Aorta (tissue), 5 donors: ENCODE measurements at regions of chr5 and their contacts with region 1.

Region 1: GRCh38 chr5:176537608-176538504 is 654 bp upstream of the RNF44 start:
- DNase-seq: peak; percentile 99
- ATAC-seq: peak; percentile 95
- H3K4me3 ChIP-seq: peak overlapping the region; percentile 68 to 77
- H3K27ac ChIP-seq: peak overlapping the region in 1 of 2 donors; percentile 93
- H3K4me1 ChIP-seq: no peaks in the 10 kb centered on the region
- H3K27me3 ChIP-seq: no peaks in the 10 kb centered on the region

Region 2: DNA sequence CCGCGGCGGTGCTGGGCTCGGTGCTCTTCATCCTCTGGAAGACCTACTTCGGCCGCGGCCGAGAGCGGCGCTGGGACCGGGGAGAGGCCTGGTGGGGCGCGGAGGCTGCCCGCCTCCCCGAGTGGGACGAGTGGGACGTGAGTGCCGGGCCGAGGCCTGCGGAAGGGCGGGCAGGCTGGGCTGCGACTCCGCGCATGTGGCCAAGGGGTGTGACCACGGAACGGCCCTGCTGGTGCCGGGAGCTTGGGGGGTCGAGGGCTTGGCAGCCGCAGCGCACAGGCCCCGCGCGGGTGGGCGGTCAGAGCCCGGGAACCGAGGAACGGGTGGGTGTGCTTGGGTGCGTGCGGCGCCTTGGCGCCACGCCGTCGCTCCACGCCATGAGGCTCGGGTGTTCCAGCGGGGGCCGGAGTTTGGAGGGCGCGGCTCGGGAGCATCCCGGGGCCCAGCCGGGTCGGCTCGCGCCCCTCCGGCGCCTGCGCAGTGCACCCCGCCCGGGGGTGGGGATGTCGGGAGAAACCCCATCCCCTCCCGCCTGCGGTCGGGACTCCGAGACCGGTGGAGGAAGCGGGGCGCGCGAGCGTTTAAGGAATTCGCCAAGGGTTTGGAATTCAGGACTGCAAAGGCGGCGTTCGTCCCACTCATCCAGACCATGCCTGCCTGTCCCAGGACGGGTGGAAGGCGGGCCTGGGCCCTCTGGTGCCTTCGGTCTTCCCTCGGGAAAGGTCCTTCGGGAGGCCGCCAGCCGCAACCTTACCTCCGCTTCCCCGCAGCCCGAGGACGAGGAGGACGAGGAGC is 172.0 kb before region 1 on chr5:
- intact Hi-C with region 1: loop called in 1 of 2 experiments (anchors 5 kb)
- DNase-seq: peak; percentile 75 to 86
- ATAC-seq: peak; percentile 49
- H3K4me3 ChIP-seq: peak overlapping the region; percentile 46 to 65
- H3K27ac ChIP-seq: peak overlapping the region in 1 of 2 donors; percentile 0
- H3K4me1 ChIP-seq: no peaks in the 10 kb centered on the region
- H3K27me3 ChIP-seq: no peaks in the 10 kb centered on the region

Region 3: GRCh38 chr5:176388444-176389134 is 149.3 kb before region 1 on chr5 and contains the starts of genes HIGD2A and NOP16:
- intact Hi-C with region 1: loop called (anchors 5 to 10 kb)
- DNase-seq: peak; percentile 100
- ATAC-seq: peak; percentile 98
- H3K4me3 ChIP-seq: peak within 1 kb of the TSS; percentile 35 to 39
- H3K27ac ChIP-seq: peak within 1 kb of the TSS; percentile 31 to 56
- H3K4me1 ChIP-seq: peaks cover 0 to 3% of the 10 kb centered on the region in 2 donors
- H3K27me3 ChIP-seq: no peaks in the 10 kb centered on the region
- total RNA-seq, gene HIGD2A: 46.8 to 60.9 TPM
- total RNA-seq, gene NOP16: 9.7 to 19.2 TPM

Region 4: GRCh38 chr5:176415952-176416924 is 121.6 kb before region 1 on chr5 and contains the start of gene CLTB:
- intact Hi-C with region 1: loop called (anchors 10 kb)
- DNase-seq: peak; percentile 93 to 98
- ATAC-seq: peak; percentile 98
- H3K4me3 ChIP-seq: peak within 1 kb of the TSS; percentile 91 to 98
- H3K27ac ChIP-seq: peak within 1 kb of the TSS; percentile 89 to 90
- H3K4me1 ChIP-seq: no peaks in the 10 kb centered on the region
- H3K27me3 ChIP-seq: no peaks in the 10 kb centered on the region
- total RNA-seq, gene CLTB: 86.7 to 124 TPM

Region 5: DNA sequence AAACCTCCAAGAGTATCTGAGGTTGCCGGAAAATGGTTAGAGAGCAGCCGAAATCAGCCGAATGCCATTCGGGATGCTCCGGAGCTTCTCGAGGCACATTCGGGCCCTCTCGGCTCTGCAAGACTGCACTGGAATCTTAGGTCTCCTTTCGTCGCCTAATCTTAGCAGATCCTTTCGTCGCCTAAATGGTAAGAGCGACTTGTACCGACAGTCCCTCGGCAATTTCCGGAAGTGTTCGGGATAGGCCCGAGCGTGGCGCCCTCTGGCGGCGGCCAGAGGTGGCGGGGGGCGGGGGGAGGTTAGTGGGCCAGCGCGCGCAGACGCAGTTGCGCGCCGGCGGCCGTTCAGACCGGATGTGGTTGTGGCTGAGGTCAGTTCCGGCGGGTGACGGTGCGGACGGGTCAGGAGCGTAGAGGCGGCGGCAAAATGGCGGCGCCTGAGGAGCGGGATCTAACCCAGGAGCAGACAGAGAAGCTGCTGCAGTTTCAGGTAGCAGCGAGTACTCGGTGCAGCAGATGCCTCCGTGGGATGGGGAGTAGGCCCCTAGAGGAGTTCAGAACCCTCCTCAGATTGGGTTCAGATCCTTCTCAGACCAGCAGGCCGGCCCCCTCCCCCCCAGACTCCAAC is 89.8 kb before region 1 on chr5 and contains the start of gene FAF2:
- intact Hi-C with region 1: loop called in 1 of 2 experiments (anchors 5 kb)
- DNase-seq: peak; percentile 98 to 99
- ATAC-seq: peak; percentile 99
- H3K4me3 ChIP-seq: peak within 1 kb of the TSS; percentile 68 to 95
- H3K27ac ChIP-seq: peak within 1 kb of the TSS; percentile 77 to 93
- H3K4me1 ChIP-seq: peaks cover 0 to 1% of the 10 kb centered on the region in 2 donors
- H3K27me3 ChIP-seq: no peaks in the 10 kb centered on the region
- total RNA-seq, gene FAF2: 27.5 to 31.4 TPM

Region 6: GRCh38 chr5:176481711-176482110 is 56.1 kb before region 1 on chr5:
- intact Hi-C with region 1: no loop called
- DNase-seq: no peak
- ATAC-seq: no peak
- H3K4me3 ChIP-seq: no peak overlapping the region
- H3K27ac ChIP-seq: no peak overlapping the region
- H3K4me1 ChIP-seq: no peaks in the 10 kb centered on the region
- H3K27me3 ChIP-seq: no peaks in the 10 kb centered on the region

Region 7: GRCh38 chr5:176647030-176647866 is 109.4 kb after region 1 on chr5 and contains the start of gene TSPAN17:
- intact Hi-C with region 1: loop called (anchors 5 kb)
- DNase-seq: peak; percentile 100
- ATAC-seq: peak; percentile 98
- H3K4me3 ChIP-seq: peak within 1 kb of the TSS; percentile 40 to 82
- H3K27ac ChIP-seq: peak within 1 kb of the TSS in 1 of 2 donors; percentile 26
- H3K4me1 ChIP-seq: no peaks in the 10 kb centered on the region
- H3K27me3 ChIP-seq: no peaks in the 10 kb centered on the region
- total RNA-seq, gene TSPAN17: 17.9 to 22.9 TPM